Dendritic cell treated with granulocyte-macrophage colony-stimulating factor and Interleukin-4, amounts not matched to agents 40 ng/mL and 50 ng/mL, for 4 days (primary cell): ENCODE measurements at regions of chr17 and their contacts with region 1.

Region 1: DNA sequence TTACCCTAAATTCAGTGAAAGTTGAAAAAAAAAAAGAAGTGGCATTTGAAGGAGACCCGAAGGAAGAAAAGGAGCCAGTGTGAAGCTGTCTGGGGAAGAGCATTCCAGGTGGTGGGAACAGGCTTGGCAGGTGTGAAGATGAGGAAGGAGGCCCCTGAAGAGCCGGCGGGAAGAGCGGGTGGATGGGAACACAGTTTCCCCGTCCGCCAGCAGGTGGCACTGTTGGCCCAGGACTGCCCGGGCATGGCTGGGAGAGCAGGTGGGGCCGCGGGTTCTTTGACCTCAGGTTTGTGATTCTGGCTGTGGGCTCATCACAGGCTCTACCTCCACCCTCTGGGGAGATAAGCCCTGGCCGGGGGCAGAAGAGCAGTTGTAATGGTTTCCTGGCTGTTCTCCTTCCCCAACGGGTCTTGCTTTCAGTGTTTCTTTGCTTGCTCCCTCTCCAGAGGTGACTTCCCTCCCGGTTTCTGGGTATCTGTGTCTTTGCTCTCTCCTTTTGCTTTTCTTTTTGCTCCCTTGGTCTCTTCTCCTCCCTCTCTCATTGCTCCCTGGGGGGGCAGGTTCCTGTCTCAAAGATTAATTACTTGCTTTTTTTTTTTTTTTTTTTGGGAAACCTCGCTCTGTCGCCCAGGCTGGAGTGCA is 32.3 kb downstream of the RAP1GAP2 start:
- H3K4me3 Mint-ChIP-seq: no peak overlapping the region
- H3K27ac Mint-ChIP-seq: no peak overlapping the region
- H3K4me1 Mint-ChIP-seq: peaks cover 38% of the 10 kb centered on the region
- H3K27me3 Mint-ChIP-seq: no peaks in the 10 kb centered on the region

Region 2: DNA sequence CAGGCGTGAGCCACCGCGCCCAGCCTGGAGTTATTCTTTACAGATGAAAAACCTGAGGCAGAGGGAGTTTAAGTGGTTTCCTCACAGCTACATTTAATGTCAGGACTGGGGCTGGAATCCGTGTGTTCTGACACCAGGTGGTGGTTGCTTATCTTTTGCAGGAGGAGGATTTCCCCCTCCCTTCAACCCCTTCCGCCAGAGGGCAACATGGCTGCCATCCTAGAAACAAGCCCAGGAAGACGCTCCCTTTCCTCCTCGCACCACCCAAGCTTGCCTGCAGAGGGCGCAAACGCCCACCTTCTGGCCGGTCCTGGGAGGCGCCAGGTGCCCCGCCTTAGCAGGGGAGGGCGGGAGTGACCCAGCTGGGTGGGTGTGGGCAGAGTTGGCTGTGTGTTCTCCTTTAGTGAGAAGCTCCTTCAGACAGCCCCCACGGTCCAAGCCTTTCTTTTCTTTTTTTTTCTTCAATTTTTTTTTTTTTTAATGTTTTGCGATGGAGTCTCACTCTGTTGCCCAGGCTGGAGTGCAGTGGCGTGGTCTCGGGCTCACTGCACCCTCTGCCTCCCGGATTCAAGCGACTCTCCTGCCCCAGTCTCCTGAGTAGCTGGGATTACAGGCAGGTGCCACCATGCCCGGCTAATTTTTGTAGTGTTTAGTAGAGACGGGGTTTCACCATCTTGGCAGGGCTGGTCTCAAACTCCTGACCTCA is 42.2 kb before region 1 on chr17:
- intact Hi-C with region 1: loop called (anchors 5 kb)
- H3K4me3 Mint-ChIP-seq: peak overlapping the region; percentile 58
- H3K27ac Mint-ChIP-seq: peak overlapping the region; percentile 19
- H3K4me1 Mint-ChIP-seq: peaks cover 37% of the 10 kb centered on the region
- H3K27me3 Mint-ChIP-seq: peaks cover 6% of the 10 kb centered on the region

Region 3: GRCh38 chr17:2814481-2815341 is 13.8 kb before region 1 on chr17:
- intact Hi-C with region 1: no loop called
- H3K4me3 Mint-ChIP-seq: peak overlapping the region; percentile 80
- H3K27ac Mint-ChIP-seq: peak overlapping the region; percentile 63
- H3K4me1 Mint-ChIP-seq: peaks cover 45% of the 10 kb centered on the region
- H3K27me3 Mint-ChIP-seq: peaks cover 1% of the 10 kb centered on the region

Region 4: DNA sequence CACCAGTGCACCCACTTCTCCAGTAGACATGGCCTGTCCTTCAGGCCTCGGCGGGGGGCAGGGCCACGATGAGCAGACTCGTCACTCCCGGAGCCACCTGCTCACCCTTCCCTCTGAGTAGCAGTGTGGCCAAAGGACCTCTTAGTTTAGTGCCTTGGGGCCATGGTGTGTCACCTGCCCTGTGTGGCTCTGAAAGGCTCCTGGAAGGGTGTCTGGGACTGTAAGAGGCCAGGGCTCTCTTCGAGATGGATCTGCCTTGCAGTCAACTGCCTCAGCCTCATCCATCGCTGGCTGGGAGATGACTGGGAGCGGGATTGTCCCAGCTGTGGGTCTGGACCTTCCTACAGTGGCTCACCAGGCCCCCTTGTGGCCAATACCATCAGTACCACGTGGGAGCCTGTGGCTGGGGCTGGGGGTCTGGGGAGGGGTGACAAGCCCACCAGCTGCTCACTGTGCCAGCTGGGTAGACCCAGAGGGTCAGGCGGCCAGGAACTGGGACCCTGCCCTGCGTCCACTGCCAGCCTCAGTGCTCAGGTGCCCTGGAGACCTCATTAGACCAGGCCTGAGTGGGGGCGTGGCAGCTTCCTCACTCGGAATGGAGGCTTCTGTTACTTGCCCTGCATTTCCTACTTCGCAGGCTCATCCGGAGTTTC is 101.5 kb after region 1 on chr17:
- intact Hi-C with region 1: loop called (anchors 2 kb)
- H3K4me3 Mint-ChIP-seq: no peak overlapping the region
- H3K27ac Mint-ChIP-seq: no peak overlapping the region
- H3K4me1 Mint-ChIP-seq: peaks cover 33% of the 10 kb centered on the region
- H3K27me3 Mint-ChIP-seq: no peaks in the 10 kb centered on the region

Region 5: GRCh38 chr17:2949469-2950044 is 121.0 kb after region 1 on chr17:
- intact Hi-C with region 1: no loop called
- H3K4me3 Mint-ChIP-seq: no peak overlapping the region
- H3K27ac Mint-ChIP-seq: no peak overlapping the region
- H3K4me1 Mint-ChIP-seq: peaks cover 8% of the 10 kb centered on the region
- H3K27me3 Mint-ChIP-seq: no peaks in the 10 kb centered on the region

Region 6: GRCh38 chr17:3012926-3013581 is 184.5 kb after region 1 on chr17:
- intact Hi-C with region 1: loop called (anchors 1 kb)
- H3K4me3 Mint-ChIP-seq: no peak overlapping the region
- H3K27ac Mint-ChIP-seq: no peak overlapping the region
- H3K4me1 Mint-ChIP-seq: no peaks in the 10 kb centered on the region
- H3K27me3 Mint-ChIP-seq: no peaks in the 10 kb centered on the region